OCI-LY7 (cell line): ENCODE measurements at regions of chr3 and their contacts with region 1.

Region 1: GRCh38 chr3:187902041-187902471 is 156.8 kb upstream of the BCL6 start:
- DNase-seq: peak; percentile 96
- H3K4me3 ChIP-seq: peak overlapping the region; percentile 59
- H3K27ac ChIP-seq: peak overlapping the region; percentile 100
- H3K4me1 ChIP-seq: peaks cover 98% of the 10 kb centered on the region
- CTCF ChIP-seq: no peak

Region 2: DNA sequence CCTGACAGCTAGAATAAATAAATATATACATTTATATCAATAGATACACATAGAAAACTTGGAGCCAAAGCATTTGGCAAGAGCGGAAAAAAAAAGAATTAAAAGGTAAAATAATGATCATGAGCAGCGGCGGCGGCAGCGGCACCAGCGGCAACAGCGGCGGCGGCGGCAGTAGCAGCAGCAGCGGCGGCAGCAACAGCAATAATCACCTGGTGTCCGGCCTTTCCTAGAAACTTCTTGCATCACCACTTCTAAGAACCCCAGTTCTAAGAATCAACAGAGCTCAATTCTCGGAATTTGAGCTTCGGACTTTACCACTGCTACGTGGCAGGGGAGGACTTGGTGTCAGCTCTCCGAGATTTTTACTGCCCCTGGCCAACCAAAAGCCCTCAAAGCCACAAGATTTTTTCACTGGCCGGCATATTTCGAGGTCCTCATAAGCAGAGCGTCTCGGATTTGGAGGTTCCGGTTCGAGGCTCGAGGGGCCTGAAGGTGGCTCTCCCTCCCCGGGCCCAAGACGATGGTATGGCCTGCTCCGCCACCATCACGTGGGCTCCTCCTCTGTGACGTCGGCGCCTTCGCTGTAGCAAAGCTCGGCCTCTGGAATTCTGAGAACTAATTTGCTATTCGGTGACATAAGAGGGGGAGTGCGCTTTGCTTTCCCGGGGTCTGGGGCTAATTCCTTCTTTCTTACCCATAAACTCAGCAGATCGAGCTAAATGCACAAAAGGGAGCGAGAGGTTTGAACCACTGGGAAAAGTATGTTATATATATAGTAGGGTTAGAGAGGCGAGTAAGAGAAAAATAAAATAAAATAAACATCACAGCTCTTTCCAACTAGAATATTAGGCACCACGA is 156.6 kb before region 1 on chr3 and contains the start of gene BCL6:
- CTCF ChIA-PET with region 1: interaction called, 6 read pairs
- POLR2A ChIA-PET with region 1: interaction called, 149 read pairs
- intact Hi-C with region 1: loop called (anchors 1 kb)
- DNase-seq: peak; percentile 98
- H3K4me3 ChIP-seq: peak within 1 kb of the TSS; percentile 86
- H3K27ac ChIP-seq: peak within 1 kb of the TSS; percentile 90
- H3K4me1 ChIP-seq: peaks cover 39% of the 10 kb centered on the region
- CTCF ChIP-seq: no peak
- total RNA-seq, gene BCL6: 62.4 and 65.6 TPM in 2 replicates

Region 3: GRCh38 chr3:187913617-187914291 is 11.7 kb after region 1 on chr3:
- CTCF ChIA-PET with region 1: interaction called, 10 read pairs
- POLR2A ChIA-PET with region 1: interaction called, 136 read pairs
- intact Hi-C with region 1: no loop called
- DNase-seq: peak; percentile 73
- H3K4me3 ChIP-seq: peak overlapping the region; percentile 9
- H3K27ac ChIP-seq: peak overlapping the region; percentile 97
- H3K4me1 ChIP-seq: peaks cover 90% of the 10 kb centered on the region
- CTCF ChIP-seq: no peak

Region 4: GRCh38 chr3:187929112-187929816 is 27.2 kb after region 1 on chr3:
- CTCF ChIA-PET with region 1: interaction called, 3 read pairs
- POLR2A ChIA-PET with region 1: interaction called, 476 read pairs
- intact Hi-C with region 1: no loop called
- DNase-seq: no peak
- H3K4me3 ChIP-seq: no peak overlapping the region
- H3K27ac ChIP-seq: peak overlapping the region; percentile 4
- H3K4me1 ChIP-seq: peaks cover 89% of the 10 kb centered on the region
- CTCF ChIP-seq: no peak

Region 5: DNA sequence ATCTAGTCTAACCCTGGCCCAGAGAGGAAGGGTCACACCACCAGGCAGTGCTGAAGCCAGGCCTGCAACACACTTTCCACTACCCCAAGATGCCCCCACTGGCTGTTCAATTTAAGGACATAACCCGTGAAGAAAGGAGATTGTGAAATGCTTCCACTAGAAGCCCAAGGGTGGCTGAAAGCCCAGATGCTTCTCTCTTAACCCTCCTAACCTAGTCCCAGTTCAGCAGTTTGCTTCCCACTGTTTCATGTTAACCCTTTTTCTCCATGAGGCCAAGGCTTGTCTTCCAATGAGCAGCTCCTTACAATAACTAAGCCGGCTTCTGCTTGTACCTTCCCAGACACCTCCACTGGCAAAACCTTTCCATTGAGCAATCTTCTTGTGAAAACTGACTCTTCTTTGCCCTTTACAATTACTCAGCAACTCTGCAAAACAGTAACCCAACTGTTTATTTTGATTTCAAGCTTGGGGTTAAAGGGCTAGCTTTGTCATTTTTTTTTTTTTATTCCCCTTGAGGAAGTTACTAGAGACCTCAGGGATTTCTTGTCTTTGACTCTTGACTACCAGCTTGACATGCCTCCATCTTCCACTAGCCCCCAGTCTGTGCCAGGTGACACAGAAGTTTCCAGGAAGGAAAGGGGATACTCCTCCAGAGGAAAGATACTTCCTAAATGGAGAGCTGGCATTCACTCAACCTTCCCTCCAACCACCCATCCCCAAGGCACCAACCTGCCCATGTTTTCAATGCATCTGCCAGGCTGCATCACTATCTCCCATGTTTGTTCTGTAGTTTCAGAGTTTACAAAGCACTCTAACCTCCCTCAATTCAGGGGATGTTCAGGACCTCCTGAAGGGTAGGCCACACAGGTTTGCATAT is 53.3 kb after region 1 on chr3:
- CTCF ChIA-PET with region 1: interaction called, 4 read pairs
- POLR2A ChIA-PET with region 1: interaction called, 476 read pairs
- intact Hi-C with region 1: loop called (anchors 1 kb)
- DNase-seq: no peak
- H3K4me3 ChIP-seq: no peak overlapping the region
- H3K27ac ChIP-seq: peak overlapping the region; percentile 99
- H3K4me1 ChIP-seq: peaks cover 100% of the 10 kb centered on the region
- CTCF ChIP-seq: 0 out of 2 replicates have a peak, but pooled peaks have one; percentile 21

Region 6: GRCh38 chr3:188000361-188000861 is 98.4 kb after region 1 on chr3:
- CTCF ChIA-PET with region 1: no interaction called
- POLR2A ChIA-PET with region 1: no interaction called
- intact Hi-C with region 1: loop called (anchors 1 kb)
- DNase-seq: peak; percentile 82
- H3K4me3 ChIP-seq: peak overlapping the region; percentile 60
- H3K27ac ChIP-seq: peak overlapping the region; percentile 96
- H3K4me1 ChIP-seq: peaks cover 83% of the 10 kb centered on the region
- CTCF ChIP-seq: no peak